HCT116 (cell line): ENCODE measurements at regions of chr7 and their contacts with region 1.

Region 1: DNA sequence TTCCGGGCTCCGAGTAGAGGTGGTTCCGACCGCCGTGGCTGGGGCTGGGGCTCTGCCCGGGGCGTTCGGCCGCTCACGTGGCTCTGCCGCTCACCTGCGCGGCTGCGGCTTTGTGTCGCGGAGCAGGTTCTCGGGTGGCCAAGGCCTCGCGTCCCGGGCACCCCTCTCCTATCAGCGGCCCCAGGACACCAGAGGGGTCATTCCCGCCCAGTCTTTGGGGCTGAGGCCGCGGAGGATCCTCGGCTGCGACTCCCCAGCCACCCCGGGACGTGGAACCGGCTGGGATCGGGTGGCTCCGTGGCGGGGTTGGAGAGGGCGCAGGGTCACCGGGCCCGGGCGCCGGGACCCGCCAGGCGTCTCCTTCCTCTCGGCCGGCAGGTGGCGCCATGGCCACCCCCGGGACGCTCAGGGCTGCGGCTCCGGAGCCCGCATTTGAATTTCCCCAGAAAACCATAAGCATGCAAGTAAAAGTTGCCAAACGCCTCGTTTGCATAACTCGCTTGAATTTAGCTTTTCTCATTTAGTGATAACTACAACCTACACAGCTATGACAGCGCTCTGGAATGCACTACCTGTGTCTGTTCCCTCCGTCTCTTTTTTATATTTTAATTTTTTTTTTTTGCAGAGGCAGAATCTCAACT is 1.2 kb downstream of the COL26A1 start:
- DNase-seq: peak; percentile 15
- ATAC-seq: peak; percentile 99
- H3K4me3 ChIP-seq: peak overlapping the region; percentile 37 to 54
- H3K27ac ChIP-seq: no peak overlapping the region
- H3K4me1 ChIP-seq: peaks cover 0 to 8% of the 10 kb centered on the region in 2 experiments; a peak in 1 of 4 replicates
- H3K27me3 ChIP-seq: no peaks in the 10 kb centered on the region
- CTCF ChIP-seq: peak; percentile 78 to 89 (median 87)
- POLR2A ChIP-seq: no peak
- RAD21 ChIP-seq: peak; percentile 80

Region 2: DNA sequence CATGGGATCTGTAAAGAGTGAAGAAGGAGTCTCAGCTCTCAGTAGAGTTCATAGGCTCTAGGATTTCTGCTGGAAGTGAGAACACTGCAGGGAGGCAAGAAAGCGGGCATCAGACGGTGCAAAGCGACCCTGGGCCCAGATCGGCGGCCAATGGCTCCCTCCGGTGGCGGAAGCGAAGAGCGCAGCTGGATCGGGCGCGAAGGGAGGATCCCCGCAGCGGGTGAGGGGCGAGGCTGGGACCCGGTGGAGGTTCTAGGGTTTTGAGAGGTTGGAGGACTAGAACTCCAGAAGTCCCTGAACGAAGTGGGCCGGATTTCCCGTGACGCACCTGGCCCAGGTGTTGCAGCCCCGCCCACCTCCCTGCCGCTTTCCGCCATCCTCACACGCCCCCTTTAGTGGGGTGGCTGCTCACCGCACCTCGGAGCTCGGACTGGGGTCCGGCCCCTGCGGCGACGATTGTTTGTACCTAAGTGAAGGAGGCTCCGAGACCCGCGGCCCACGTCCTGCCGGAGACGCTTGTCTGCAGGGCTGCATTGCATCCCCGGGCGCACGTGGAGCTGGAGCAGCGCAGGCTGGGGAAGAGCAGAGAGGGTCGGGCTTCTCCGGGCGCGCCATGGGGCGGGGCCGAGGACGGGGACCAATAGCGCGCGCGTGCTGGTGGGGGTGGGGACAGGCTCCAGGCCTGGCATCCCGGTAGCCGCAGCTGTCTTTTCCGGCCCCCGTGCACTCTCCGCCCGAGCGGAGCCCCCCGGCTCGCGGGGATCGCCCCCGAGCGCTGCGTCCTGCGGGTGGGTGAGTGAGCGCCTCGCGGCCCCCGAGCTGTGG is 511.6 kb before region 1 on chr7 and contains the start of gene SLC12A9:
- CTCF ChIA-PET with region 1: no interaction called
- POLR2A ChIA-PET with region 1: no interaction called
- RAD21 ChIA-PET with region 1: no interaction called
- intact Hi-C with region 1: no loop called
- DNase-seq: peak; percentile 81
- ATAC-seq: peak; percentile 97
- H3K4me3 ChIP-seq: peak within 1 kb of the TSS; percentile 83 to 84
- H3K27ac ChIP-seq: peak within 1 kb of the TSS; percentile 63
- H3K4me1 ChIP-seq: peaks cover 6 to 16% of the 10 kb centered on the region in 2 experiments; a peak in 3 of 4 replicates
- H3K27me3 ChIP-seq: no peaks in the 10 kb centered on the region
- CTCF ChIP-seq: peak; percentile 84 to 95 (median 94)
- POLR2A ChIP-seq: peak; percentile 17
- RAD21 ChIP-seq: peak; percentile 99
- total RNA-seq, gene SLC12A9: 24.6 TPM

Region 3: DNA sequence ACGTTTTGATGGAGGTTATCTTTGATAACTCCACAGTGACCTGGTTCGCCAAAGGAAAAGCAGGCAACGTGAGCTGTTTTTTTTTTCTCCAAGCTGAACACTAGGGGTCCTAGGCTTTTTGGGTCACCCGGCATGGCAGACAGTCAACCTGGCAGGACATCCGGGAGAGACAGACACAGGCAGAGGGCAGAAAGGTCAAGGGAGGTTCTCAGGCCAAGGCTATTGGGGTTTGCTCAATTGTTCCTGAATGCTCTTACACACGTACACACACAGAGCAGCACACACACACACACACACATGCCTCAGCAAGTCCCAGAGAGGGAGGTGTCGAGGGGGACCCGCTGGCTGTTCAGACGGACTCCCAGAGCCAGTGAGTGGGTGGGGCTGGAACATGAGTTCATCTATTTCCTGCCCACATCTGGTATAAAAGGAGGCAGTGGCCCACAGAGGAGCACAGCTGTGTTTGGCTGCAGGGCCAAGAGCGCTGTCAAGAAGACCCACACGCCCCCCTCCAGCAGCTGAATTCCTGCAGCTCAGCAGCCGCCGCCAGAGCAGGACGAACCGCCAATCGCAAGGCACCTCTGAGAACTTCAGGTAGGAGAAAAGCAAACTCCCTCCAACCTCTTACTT is 237.1 kb before region 1 on chr7 and contains the start of gene SERPINE1:
- CTCF ChIA-PET with region 1: no interaction called
- POLR2A ChIA-PET with region 1: no interaction called
- RAD21 ChIA-PET with region 1: no interaction called
- intact Hi-C with region 1: no loop called
- DNase-seq: peak; percentile 86
- ATAC-seq: peak; percentile 71
- H3K4me3 ChIP-seq: peak within 1 kb of the TSS; percentile 40 to 50
- H3K27ac ChIP-seq: peak within 1 kb of the TSS; percentile 57
- H3K4me1 ChIP-seq: peaks cover 50 to 68% of the 10 kb centered on the region in 2 experiments
- H3K27me3 ChIP-seq: no peaks in the 10 kb centered on the region
- CTCF ChIP-seq: peak in 2 of 3 experiments; percentile 41 to 43; a peak in 3 of 6 replicates
- POLR2A ChIP-seq: peak; percentile 71
- RAD21 ChIP-seq: no peak
- total RNA-seq, gene SERPINE1: 12.8 TPM

Region 4: GRCh38 chr7:101410743-101411507 is 47.1 kb after region 1 on chr7:
- CTCF ChIA-PET with region 1: no interaction called
- POLR2A ChIA-PET with region 1: interaction called, 3 read pairs
- RAD21 ChIA-PET with region 1: no interaction called
- intact Hi-C with region 1: loop called (anchors 2 kb)
- DNase-seq: peak; percentile 27
- ATAC-seq: peak; percentile 92
- H3K4me3 ChIP-seq: no peak overlapping the region
- H3K27ac ChIP-seq: no peak overlapping the region
- H3K4me1 ChIP-seq: peaks cover 0 to 6% of the 10 kb centered on the region in 2 experiments; a peak in 2 of 4 replicates
- H3K27me3 ChIP-seq: no peaks in the 10 kb centered on the region
- CTCF ChIP-seq: peak; percentile 63 to 95 (median 94)
- POLR2A ChIP-seq: no peak
- RAD21 ChIP-seq: peak; percentile 57

Region 5: GRCh38 chr7:101436857-101437576 is 73.2 kb after region 1 on chr7:
- CTCF ChIA-PET with region 1: interaction called, 8 read pairs
- POLR2A ChIA-PET with region 1: no interaction called
- RAD21 ChIA-PET with region 1: no interaction called
- intact Hi-C with region 1: loop called (anchors 2 kb)
- DNase-seq: peak; percentile 37
- ATAC-seq: peak; percentile 90
- H3K4me3 ChIP-seq: no peak overlapping the region
- H3K27ac ChIP-seq: no peak overlapping the region
- H3K4me1 ChIP-seq: peaks cover 7 to 14% of the 10 kb centered on the region in 2 experiments; a peak in 3 of 4 replicates
- H3K27me3 ChIP-seq: no peaks in the 10 kb centered on the region
- CTCF ChIP-seq: no peak
- POLR2A ChIP-seq: no peak
- RAD21 ChIP-seq: no peak

Region 6: GRCh38 chr7:101507791-101508252 is 144.0 kb after region 1 on chr7:
- CTCF ChIA-PET with region 1: no interaction called
- POLR2A ChIA-PET with region 1: no interaction called
- RAD21 ChIA-PET with region 1: no interaction called
- intact Hi-C with region 1: loop called (anchors 2 kb)
- DNase-seq: peak; percentile 63
- ATAC-seq: peak; percentile 89
- H3K4me3 ChIP-seq: no peak overlapping the region
- H3K27ac ChIP-seq: no peak overlapping the region
- H3K4me1 ChIP-seq: peaks cover 0 to 4% of the 10 kb centered on the region in 2 experiments; a peak in 1 of 4 replicates
- H3K27me3 ChIP-seq: no peaks in the 10 kb centered on the region
- CTCF ChIP-seq: peak; percentile 80 to 100 (median 98)
- POLR2A ChIP-seq: no peak
- RAD21 ChIP-seq: peak; percentile 98